ENCODE measurements at regions of chr7 and their contacts with region 1.

Region 1: DNA sequence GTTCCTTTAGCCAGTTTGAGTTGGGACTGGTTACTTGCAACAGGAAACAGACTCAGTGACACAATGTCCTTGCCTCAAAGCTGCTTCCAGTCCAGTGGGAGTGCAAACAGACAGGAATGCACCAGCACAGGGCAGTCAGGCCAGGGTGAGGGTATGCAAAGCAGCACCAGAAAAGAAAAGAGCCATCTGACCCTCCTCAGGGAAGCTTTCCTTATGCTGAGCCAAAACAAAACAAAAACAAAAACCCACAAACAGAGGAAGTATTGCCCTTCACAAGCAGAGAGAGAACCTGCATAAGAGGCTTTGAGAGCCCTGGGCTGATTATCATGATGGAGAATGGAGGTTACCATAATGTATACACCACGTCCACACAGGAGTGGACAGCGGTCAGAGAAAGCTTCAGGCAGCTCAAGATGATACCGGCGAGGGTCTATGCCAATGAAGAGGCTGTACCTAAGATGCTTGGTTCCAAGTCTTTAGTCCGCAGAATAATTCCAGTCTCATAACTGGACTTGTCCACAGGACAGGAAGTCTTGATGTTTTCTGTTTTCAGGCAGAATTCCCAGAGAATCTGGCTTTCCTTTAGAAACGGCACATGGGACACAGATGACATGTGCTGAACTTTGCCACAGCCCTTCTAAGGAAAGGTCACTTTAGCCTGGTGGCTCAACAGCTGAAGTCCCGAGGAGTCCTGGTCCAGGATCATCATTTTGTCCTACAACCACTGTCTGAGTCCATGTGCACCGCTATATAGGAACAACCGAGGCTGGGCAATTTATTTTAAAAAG is 263.3 kb downstream of the TNS3 start:
- DNase-seq: peak in 1 of 2 donors; percentile 9
- H3K4me3 ChIP-seq: no peak overlapping the region
- H3K27ac ChIP-seq: no peak overlapping the region
- H3K4me1 ChIP-seq: no peaks in the 10 kb centered on the region
- H3K27me3 ChIP-seq: no peaks in the 10 kb centered on the region
- CTCF ChIP-seq: no peak
- POLR2A ChIP-seq: no peak

Region 2: GRCh38 chr7:47342296-47343060 is 23.9 kb after region 1 on chr7:
- intact Hi-C with region 1: loop called (anchors 1 kb)
- DNase-seq: no peak
- H3K4me3 ChIP-seq: no peak overlapping the region
- H3K27ac ChIP-seq: no peak overlapping the region
- H3K4me1 ChIP-seq: no peaks in the 10 kb centered on the region
- H3K27me3 ChIP-seq: no peaks in the 10 kb centered on the region
- CTCF ChIP-seq: no peak
- POLR2A ChIP-seq: no peak